ENCODE measurements at regions of chr20 and their contacts with region 1.

Region 1: DNA sequence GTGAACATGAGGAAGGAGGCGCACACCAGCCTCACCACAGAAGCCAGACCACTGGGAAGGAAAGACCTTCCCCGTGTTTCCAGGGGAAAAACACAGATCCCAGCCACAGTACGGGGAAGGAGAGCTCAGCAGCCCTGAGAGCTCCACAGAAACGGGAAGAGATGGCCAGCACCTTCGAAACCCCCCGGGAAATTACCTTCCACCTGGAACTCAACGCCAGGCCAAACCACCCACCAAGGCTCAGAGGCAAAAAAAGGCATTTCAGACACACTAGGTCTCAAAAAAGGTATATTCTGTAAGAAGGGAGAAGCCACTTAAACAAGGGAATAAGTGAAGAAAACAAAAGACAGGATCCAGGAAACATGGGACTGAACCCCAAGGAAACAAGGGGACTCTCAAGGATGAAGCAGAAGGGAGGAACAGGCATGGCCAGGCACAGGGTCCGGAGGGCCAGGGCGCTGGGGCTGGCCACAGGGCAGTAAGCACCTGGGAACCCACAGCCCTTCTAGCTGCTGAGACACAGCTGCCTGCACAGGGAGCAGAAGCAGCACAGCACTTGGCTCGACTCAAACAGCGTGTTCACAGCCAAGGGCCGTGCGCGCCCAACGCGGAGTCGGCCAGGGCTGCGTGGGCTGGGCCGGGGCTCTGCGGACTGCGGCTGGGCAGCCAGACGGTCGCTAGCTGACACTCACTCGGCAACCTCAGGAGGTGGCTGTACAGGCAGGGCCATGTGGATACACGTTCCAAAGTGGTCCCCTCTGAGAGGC is 44.6 kb downstream of the TAF4 start:
- DNase-seq: no peak
- H3K4me3 ChIP-seq: no peak overlapping the region
- H3K27ac ChIP-seq: no peak overlapping the region
- H3K4me1 ChIP-seq: no peaks in the 10 kb centered on the region
- H3K27me3 ChIP-seq: no peaks in the 10 kb centered on the region
- CTCF ChIP-seq: no peak

Region 2: DNA sequence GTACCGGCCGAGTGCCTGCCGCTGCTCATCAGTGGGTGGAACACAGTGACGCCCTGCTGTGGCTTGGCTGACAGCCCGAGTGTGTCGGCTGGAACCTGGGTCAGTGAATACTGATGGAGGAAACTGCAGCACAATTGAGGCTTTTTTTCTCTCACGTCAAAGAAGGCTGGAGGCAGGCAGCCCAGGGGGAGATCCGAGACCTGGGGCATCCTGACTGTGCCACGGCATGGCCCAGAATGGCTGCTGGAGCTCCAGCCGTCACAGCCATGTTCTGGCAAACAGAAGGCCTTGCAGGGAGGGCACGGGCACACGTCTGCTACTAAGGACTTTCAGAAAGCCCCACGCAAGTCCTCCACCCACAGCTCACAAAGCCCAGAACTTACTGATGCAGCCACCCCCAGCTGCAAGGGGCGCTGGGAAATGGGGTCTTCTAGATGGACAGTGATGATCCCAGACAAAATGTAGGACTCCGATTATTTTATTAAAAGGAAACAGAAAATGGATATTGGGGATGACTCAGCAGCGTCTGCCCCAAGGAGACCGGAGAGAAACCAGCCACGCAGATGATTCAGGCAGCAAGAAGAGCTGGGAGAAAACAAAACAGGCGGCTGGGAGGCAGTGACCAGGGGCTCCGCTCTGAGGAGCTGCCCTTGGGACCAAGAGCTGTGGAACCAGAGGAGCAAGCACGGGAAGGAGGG is 95.4 kb before region 1 on chr20:
- CTCF ChIA-PET with region 1: no interaction called
- dilution Hi-C with region 1: no loop called
- in situ Hi-C with region 1: no loop called
- intact Hi-C with region 1: no loop called
- DNase-seq: peak; percentile 74
- H3K4me3 ChIP-seq: no peak overlapping the region
- H3K27ac ChIP-seq: no peak overlapping the region
- H3K4me1 ChIP-seq: no peaks in the 10 kb centered on the region
- H3K27me3 ChIP-seq: no peaks in the 10 kb centered on the region
- CTCF ChIP-seq: no peak

Region 3: GRCh38 chr20:61958773-61959700 is 62.1 kb before region 1 on chr20:
- CTCF ChIA-PET with region 1: no interaction called
- dilution Hi-C with region 1: no loop called
- in situ Hi-C with region 1: no loop called
- intact Hi-C with region 1: no loop called
- DNase-seq: peak; percentile 10
- H3K4me3 ChIP-seq: no peak overlapping the region
- H3K27ac ChIP-seq: no peak overlapping the region
- H3K4me1 ChIP-seq: no peaks in the 10 kb centered on the region
- H3K27me3 ChIP-seq: no peaks in the 10 kb centered on the region
- CTCF ChIP-seq: no peak

Region 4: GRCh38 chr20:62065669-62066338 is 44.7 kb after region 1 on chr20 and contains the start of gene TAF4:
- CTCF ChIA-PET with region 1: no interaction called
- dilution Hi-C with region 1: loop called (anchors 5 kb)
- in situ Hi-C with region 1: no loop called
- intact Hi-C with region 1: no loop called
- DNase-seq: peak; percentile 61
- H3K4me3 ChIP-seq: peak within 1 kb of the TSS; percentile 66 to 78 (median 75)
- H3K27ac ChIP-seq: peak within 1 kb of the TSS; percentile 24
- H3K4me1 ChIP-seq: peaks cover 23% of the 10 kb centered on the region
- H3K27me3 ChIP-seq: no peaks in the 10 kb centered on the region
- CTCF ChIP-seq: no peak
- total RNA-seq, gene TAF4: 4.5 to 15.0 TPM